Activated CD8-positive, alpha-beta T cell treated with anti-CD3 and anti-CD28 coated beads, Interleukin-2, amount 10 ng/mL, durations not matched to agents 7 days and 5 days (primary cell): ENCODE measurements at regions of chr11 and their contacts with region 1.

Region 1: DNA sequence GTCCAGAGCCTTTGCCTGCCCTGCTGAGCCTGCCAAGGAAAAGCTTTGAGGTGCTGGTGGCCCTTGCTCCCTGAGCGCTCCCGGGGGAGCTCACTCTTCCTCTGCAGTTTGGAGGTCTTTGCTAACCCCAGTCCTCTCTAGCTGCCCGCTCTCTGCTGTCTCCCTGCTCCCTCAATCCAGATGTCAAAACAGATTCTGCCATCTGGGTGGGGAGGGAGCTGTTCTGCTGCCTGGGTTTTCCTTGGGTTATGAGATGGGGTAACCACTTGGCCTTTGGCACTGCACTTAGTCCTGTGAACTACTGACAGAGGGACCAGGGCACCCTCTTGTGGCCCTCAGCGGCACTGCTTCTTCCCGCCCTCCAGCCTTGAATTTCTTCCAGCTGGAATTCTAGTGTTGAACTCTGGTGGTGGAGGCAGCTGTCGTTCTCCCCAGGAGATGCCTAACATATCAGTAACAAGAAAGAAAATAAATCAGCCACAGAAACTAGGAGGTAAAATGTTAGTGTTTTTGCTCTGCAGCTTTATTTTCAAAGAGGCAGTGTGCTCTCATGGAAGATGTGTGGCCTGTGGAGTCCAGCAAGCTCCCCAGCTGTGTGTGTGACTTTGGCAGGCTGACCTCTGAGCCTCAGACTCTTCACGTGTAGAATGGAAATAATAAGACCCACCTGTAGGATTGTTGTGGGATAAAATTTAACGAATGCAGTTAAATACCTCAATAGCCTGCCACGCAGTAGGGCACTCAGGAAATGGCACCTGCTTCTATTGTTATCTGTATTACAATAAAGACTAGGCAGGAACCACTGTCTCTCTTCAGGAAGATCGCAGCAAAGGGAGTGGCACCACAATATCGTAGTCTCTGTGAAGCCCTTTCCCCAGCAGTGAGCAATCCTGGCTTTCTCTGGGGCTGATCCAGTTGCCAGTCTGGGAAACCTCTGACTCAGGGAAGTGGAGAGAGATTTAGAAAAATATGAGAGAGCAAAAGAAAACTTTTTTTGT is 23.4 kb downstream of the ARFGAP2 start:
- DNase-seq: peak; percentile 64
- ATAC-seq: peak; percentile 37
- H3K4me3 Mint-ChIP-seq: no peak overlapping the region
- H3K27ac Mint-ChIP-seq: peak overlapping the region; percentile 60
- H3K4me1 Mint-ChIP-seq: peaks cover 38% of the 10 kb centered on the region
- H3K27me3 Mint-ChIP-seq: no peaks in the 10 kb centered on the region

Region 2: DNA sequence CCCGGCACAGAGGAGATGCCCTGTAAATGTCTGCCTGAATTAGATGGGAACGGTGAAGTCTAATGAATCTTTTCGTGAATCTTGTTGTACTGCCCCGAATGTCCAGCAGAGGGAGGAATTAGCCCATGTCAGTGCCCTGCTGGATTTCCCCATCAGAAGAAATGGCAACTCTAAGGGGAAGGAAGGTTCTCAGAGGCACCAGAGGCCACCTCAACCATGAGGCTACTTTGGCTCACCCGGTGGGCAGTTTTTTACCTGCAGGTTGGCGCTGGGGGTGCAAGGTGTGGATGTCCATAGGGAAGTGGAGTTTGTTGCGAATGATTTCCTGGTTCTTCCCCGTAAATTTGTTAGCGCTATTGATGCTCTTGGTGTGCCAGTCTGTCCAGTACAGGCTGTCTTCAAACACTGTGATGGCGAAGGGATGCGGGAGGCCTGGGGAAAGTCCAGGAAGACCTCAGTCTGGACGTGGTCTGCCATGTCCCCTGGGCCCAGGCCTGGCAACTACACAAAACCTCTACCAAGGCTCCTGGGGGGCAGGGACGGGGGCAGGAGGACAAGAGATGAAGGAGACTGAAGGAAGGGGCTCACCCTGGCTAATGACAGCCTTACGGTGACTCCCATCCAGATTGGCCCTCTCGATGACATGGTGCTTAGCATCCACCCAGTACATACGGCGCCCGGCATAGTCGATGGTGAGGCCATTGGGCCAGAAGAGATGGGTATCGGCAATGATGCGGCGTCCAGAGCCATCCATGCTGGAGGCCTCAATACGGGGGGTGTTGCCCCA is 263.4 kb before region 1 on chr11:
- CTCF ChIA-PET with region 1: interaction called, 62 read pairs
- POLR2A ChIA-PET with region 1: no interaction called
- DNase-seq: peak; percentile 84
- ATAC-seq: peak; percentile 86
- H3K4me3 Mint-ChIP-seq: no peak overlapping the region
- H3K27ac Mint-ChIP-seq: no peak overlapping the region
- H3K4me1 Mint-ChIP-seq: peaks cover 3% of the 10 kb centered on the region
- H3K27me3 Mint-ChIP-seq: no peaks in the 10 kb centered on the region

Region 3: GRCh38 chr11:46916286-46917108 is 236.8 kb before region 1 on chr11:
- CTCF ChIA-PET with region 1: interaction called, 51 read pairs
- POLR2A ChIA-PET with region 1: interaction called, 3 read pairs
- DNase-seq: no peak
- ATAC-seq: no peak
- H3K4me3 Mint-ChIP-seq: peak overlapping the region; percentile 33
- H3K27ac Mint-ChIP-seq: no peak overlapping the region
- H3K4me1 Mint-ChIP-seq: peaks cover 32% of the 10 kb centered on the region
- H3K27me3 Mint-ChIP-seq: peaks cover 61% of the 10 kb centered on the region

Region 4: DNA sequence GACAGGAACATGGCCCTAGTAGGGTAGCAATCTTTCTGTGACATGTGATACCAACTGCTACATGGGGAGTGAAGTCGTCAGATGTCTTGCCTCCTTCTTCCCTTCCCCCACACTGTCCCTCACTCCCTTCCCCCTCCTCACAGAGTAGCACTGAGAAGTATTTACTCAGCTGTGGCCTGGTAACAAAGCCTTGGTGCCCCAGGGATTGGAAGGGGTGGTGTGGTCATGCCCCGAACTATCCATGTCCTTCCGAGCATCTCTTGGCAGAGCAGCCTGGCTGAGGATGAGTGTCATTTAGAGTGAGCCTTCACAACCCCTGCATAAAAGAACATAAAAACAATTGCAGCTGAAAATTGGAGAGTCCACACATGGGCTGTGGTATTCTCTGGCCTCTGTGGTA is 22.7 kb before region 1 on chr11:
- CTCF ChIA-PET with region 1: interaction called, 11 read pairs
- POLR2A ChIA-PET with region 1: no interaction called
- DNase-seq: no peak
- ATAC-seq: no peak
- H3K4me3 Mint-ChIP-seq: no peak overlapping the region
- H3K27ac Mint-ChIP-seq: no peak overlapping the region
- H3K4me1 Mint-ChIP-seq: no peaks in the 10 kb centered on the region
- H3K27me3 Mint-ChIP-seq: no peaks in the 10 kb centered on the region

Region 5: GRCh38 chr11:47139878-47140277 is 13.4 kb before region 1 on chr11:
- CTCF ChIA-PET with region 1: interaction called, 12 read pairs
- POLR2A ChIA-PET with region 1: no interaction called
- DNase-seq: no peak
- ATAC-seq: no peak
- H3K4me3 Mint-ChIP-seq: no peak overlapping the region
- H3K27ac Mint-ChIP-seq: no peak overlapping the region
- H3K4me1 Mint-ChIP-seq: peaks cover 5% of the 10 kb centered on the region
- H3K27me3 Mint-ChIP-seq: no peaks in the 10 kb centered on the region

Region 6: DNA sequence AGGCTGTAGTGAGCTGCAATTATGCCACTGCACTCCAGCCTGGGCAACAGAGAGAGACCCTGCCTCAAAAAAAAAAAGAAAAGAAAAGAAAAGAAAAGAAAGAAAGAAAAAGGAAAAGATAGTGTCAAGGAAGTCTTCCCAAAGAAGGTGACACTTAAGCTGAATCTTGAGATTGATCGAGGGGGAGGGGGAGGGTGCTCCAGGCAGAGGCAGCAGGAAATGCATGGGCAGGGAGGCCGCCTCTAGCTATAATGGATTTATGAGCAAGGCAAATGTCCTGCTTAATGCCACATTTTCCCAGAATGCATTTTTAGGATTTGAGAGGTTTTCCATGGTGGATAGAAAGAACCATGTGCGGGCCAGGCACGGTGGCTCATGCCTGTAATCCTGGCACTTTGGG is 47.8 kb after region 1 on chr11:
- CTCF ChIA-PET with region 1: no interaction called
- POLR2A ChIA-PET with region 1: no interaction called
- DNase-seq: no peak
- ATAC-seq: no peak
- H3K4me3 Mint-ChIP-seq: no peak overlapping the region
- H3K27ac Mint-ChIP-seq: no peak overlapping the region
- H3K4me1 Mint-ChIP-seq: no peaks in the 10 kb centered on the region
- H3K27me3 Mint-ChIP-seq: peaks cover 5% of the 10 kb centered on the region

Region 7: GRCh38 chr11:47225552-47226400 is 72.5 kb after region 1 on chr11:
- CTCF ChIA-PET with region 1: no interaction called
- POLR2A ChIA-PET with region 1: no interaction called
- DNase-seq: peak; percentile 55
- ATAC-seq: peak; percentile 94
- H3K4me3 Mint-ChIP-seq: peak overlapping the region; percentile 52
- H3K27ac Mint-ChIP-seq: peak overlapping the region; percentile 86
- H3K4me1 Mint-ChIP-seq: peaks cover 28% of the 10 kb centered on the region
- H3K27me3 Mint-ChIP-seq: no peaks in the 10 kb centered on the region